ENCODE measurements at regions of chr12 and their contacts with region 1.

Region 1: DNA sequence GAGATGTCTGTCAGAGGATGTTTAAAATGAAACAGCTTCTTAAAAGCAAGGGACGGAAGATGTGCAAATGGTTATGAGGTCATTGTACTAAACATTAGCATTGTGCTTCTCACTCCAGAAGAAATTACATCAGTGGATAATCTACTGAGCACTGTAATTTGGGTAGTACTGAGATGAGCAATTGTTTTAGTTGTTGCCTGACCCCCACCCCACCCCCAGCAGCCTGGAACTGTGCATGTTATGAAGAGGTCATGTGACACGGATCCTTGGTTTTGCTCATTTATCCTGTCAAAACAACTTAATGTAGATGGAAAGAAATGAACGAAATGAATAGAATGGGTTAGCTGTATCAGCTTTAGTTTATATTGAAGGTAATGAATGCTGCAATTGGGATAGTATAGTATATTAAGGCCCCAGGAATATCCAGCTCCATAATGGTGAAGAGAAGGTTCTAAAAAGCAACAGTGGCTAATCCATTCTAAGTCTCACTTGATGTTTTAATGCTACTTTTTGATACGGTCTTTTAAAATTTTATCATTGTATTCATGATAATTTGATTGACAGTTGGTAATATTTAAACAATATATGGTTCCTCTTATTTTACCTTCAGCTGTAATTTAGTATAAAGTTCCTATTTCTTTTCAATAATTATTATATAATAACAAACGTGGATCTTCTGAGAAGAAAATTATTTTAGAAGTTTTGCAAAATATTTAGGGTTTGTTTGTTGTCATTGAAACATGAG is 58.5 kb downstream of the WNK1 start:
- DNase-seq: peak; percentile 53
- CTCF ChIP-seq: no peak

Region 2: DNA sequence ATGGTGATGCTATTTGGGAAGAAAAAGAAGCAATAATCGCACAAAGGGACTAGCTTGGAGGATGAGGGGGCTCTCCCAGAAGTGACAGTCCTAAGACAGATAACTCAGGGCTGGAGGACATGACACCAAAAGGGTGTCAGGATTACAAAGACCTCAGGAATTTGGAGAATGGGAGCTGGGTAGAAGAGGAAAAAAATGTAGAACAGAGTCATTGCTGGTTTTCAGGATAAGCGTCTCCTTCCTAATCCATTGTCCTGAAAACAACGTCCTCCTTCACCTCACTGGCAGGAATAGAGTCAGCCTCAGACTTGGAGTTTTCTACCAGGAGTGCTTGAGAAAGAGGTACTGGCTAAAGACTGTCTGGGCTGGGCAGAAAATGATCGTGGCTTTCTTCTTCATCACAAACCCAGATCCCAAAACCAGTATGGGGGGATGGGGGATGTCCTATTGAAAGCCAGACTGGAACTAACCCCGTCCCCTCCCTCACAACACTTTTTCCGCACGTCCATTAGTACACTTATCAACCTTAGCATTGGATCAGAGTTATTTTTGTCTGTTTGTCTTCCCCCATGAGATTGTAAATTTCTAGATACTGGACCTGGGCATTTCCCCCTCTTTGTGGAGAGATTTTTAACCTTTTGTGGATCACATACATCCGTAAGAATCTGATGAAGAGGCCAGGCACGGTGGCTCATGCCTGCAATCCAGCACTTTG is 336.8 kb before region 1 on chr12:
- CTCF ChIA-PET with region 1: no interaction called
- POLR2A ChIA-PET with region 1: no interaction called
- DNase-seq: no peak
- CTCF ChIP-seq: no peak

Region 3: GRCh38 chr12:569803-570434 is 240.9 kb before region 1 on chr12:
- CTCF ChIA-PET with region 1: interaction called, 49 read pairs
- POLR2A ChIA-PET with region 1: no interaction called
- DNase-seq: peak; percentile 94
- CTCF ChIP-seq: peak; percentile 95

Region 4: DNA sequence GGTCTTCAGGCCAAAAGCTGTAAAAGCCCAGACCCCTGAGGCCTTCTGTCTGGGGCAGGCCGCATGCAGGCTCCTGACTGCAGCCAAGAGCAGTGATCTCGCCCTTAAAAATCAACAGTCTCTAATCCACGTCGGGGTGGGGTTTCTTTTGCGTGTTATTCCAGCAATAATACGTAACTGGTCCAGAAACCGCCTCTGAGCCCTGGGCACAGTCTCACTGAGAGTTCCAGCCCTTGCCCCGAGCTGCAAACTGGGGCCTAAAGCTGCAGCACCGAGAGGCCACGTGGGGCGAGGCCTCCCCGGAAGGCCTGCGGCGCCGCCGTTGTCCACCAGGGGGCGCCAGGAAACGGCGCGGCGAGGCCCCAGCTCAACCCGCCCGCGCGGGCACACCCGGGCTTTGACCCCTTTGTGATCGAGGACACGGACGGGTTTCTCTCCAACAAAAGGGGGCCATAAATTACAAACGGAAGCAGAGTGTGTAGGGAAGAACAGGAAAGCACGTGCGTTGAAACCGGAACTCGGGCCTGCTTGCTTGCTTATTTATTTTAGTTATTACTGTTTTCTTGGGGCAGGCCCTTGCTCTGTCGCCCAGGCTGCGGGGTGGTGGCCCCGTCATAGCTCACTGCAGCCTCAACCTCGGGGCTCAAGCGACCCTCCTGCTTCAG is 234.8 kb before region 1 on chr12:
- CTCF ChIA-PET with region 1: interaction called, 49 read pairs
- POLR2A ChIA-PET with region 1: no interaction called
- DNase-seq: peak; percentile 93
- CTCF ChIP-seq: peak; percentile 96

Region 5: GRCh38 chr12:591167-592023 is 219.4 kb before region 1 on chr12:
- CTCF ChIA-PET with region 1: no interaction called
- POLR2A ChIA-PET with region 1: no interaction called
- DNase-seq: no peak
- CTCF ChIP-seq: no peak

Region 6: DNA sequence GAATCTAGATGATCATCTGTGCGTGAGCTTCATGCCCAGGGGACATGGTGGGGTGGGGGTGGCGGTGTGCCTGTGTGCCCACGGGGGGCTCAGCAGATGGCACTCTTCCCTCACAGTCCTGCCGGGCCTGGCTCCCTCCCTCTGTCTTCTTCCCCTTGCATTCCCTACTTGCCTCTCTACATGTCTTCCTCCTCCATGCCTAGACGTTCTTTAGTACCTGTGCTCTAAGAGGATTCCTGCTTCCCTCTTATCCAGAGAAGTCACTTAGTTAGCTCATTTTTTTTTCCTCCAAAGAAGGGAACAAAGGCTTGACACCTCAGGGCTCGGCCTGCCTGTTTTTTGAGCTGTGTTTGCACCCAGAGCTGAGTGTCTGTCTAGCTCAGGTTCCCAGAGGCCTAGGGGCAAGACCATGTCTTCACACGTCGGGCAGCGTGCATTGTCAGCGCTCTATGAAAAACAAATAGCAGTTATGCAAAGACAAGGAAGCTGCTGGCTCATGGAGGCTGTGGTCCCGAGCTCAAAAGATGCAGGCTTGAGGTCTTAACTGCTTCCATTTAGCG is 196.4 kb before region 1 on chr12:
- CTCF ChIA-PET with region 1: interaction called, 39 read pairs
- POLR2A ChIA-PET with region 1: no interaction called
- DNase-seq: peak; percentile 63
- CTCF ChIP-seq: peak; percentile 59

Region 7: GRCh38 chr12:779745-780734 is 30.8 kb before region 1 on chr12:
- CTCF ChIA-PET with region 1: interaction called, 20 read pairs
- POLR2A ChIA-PET with region 1: no interaction called
- DNase-seq: no peak
- CTCF ChIP-seq: no peak

Region 8: GRCh38 chr12:828726-829395 is 18.0 kb after region 1 on chr12:
- CTCF ChIA-PET with region 1: interaction called, 10 read pairs
- POLR2A ChIA-PET with region 1: no interaction called
- DNase-seq: no peak
- CTCF ChIP-seq: no peak

Region 9: GRCh38 chr12:857611-858010 is 46.8 kb after region 1 on chr12:
- CTCF ChIA-PET with region 1: interaction called, 14 read pairs
- POLR2A ChIA-PET with region 1: no interaction called
- DNase-seq: no peak
- CTCF ChIP-seq: no peak

Region 10: DNA sequence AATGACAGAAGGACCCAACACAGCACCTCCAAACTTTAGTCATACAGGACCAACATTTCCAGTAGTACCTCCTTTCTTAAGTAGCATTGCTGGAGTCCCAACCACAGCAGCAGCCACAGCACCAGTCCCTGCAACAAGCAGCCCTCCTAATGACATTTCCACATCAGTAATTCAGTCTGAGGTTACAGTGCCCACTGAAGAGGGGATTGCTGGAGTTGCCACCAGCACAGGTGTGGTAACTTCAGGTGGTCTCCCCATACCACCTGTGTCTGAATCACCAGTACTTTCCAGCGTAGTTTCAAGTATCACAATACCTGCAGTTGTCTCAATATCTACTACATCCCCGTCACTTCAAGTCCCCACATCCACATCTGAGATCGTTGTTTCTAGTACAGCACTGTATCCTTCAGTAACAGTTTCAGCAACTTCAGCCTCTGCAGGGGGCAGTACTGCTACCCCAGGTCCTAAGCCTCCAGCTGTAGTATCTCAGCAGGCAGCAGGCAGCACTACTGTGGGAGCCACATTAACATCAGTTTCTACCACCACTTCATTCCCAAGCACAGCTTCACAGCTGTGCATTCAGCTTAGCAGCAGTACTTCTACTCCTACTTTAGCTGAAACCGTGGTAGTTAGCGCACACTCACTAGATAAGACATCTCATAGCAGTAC is 74.0 kb after region 1 on chr12:
- CTCF ChIA-PET with region 1: no interaction called
- POLR2A ChIA-PET with region 1: no interaction called
- DNase-seq: no peak
- CTCF ChIP-seq: no peak

Region 11: DNA sequence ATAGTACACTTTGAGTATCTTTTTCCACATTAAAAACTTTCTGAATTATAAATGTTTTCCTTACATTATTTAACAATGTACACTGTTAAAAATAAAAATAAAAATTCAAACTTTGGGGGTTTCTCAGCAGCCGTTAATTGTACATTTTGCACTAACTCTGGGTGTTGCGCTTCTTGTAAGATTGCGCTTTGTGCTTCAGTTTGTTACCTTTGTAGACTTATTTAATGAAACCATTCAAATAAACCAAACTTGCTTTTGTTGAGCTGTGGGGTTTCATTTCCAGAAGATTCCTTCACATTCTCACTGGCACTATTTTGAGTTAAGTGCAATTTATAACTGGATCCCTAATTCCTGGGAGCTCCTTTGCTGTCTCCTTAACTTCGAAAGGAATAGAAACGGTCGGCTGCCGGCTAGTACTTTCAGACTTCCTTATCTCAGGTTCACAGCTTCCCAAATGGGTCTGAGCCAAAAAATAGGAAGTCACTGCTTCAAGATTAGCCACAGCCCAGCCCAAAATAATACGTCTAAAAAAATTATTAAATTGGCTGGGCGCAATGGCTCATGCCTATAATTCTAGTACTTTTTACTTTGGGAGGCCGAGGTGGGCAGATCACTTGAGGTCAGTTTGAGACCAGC is 100.5 kb after region 1 on chr12:
- CTCF ChIA-PET with region 1: no interaction called
- POLR2A ChIA-PET with region 1: no interaction called
- DNase-seq: no peak
- CTCF ChIP-seq: no peak